ENCODE measurements at regions of chr1 and their contacts with region 1.

Region 1: GRCh38 chr1:221868593-221869303 is 126.9 kb upstream of the DUSP10 start:
- DNase-seq: peak; percentile 93
- ATAC-seq: peak; percentile 93
- H3K4me3 ChIP-seq: peak overlapping the region; percentile 19; the same call in 1 of the 2 replicates
- H3K27ac ChIP-seq: peak overlapping the region; percentile 61
- H3K4me1 ChIP-seq: peaks cover 23% of the 10 kb centered on the region
- H3K27me3 ChIP-seq: no peaks in the 10 kb centered on the region
- CTCF ChIP-seq: no peak

Region 2: DNA sequence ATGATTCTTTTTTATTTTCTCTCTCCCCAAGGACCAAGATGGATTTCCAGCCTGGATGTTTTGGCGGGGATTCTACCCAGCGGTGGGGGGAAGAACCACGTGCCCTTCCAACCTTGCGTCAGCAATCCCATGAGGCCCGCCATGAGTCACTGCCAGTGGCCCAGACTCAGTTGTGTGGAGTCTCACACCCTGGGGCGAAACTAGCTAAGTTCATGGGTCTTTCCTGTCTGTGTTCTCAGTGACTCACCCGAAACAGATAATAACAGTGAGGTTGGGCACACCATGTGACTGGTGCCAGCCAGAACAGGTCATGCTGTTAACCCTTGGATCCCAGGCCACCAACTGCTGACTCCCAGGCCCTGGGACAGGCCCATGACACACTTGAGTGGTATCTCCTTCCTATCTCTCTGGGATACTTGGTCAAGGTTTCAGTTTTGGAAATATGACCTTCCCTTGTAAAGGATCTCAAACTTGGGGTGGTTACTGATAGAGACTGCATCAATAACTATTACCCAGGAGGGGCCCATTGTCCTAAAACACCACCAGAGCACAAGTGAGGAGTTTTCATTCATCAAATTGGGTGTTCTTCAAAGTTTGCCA is 28.9 kb before region 1 on chr1:
- CTCF ChIA-PET with region 1: no interaction called
- POLR2A ChIA-PET with region 1: no interaction called
- intact Hi-C with region 1: loop called (anchors 2 kb)
- DNase-seq: peak; percentile 97
- ATAC-seq: peak; percentile 97
- H3K4me3 ChIP-seq: no peak overlapping the region
- H3K27ac ChIP-seq: peak overlapping the region; percentile 80
- H3K4me1 ChIP-seq: peaks cover 21% of the 10 kb centered on the region
- H3K27me3 ChIP-seq: no peaks in the 10 kb centered on the region
- CTCF ChIP-seq: no peak